CD14-positive monocyte (primary cell): ENCODE measurements at regions of chr9 and their contacts with region 1.

Region 1: DNA sequence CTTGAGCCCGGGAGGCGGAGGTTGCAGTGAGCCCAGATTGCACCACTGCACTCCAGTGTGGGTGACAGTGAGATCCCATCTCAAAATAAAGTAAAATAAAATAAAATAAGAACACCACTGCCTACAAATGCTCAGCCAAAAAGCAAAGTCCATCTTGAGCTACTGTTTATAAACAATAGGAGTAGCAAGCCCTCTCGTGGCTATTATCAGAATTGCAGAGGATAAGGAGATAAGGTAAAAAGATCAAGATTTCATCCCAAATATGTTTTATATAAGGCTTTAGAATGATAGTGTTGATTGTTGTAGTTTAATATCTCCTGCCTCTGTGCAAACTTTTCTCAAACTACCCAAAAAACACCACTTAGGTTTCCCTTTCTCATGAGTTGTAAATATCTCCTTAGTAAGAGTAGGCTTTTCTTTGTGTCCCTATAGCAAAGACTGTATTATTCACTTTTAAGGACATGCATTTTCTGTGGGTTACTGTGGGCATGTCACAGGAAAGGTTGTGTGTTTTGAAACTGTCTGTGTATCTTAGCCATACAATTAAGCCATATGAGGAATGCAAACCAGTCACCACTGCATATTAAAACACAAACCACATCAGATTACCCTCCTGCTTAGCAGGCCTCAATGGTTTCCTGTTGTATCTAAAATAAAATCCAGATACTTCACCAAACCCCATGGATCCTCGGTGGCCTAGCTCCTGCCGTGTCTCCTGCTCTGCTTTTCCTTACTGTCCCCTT is 31.8 kb upstream of the CKS2 start:
- DNase-seq: peak in 2 of 3 donors; percentile 16 to 36
- H3K4me3 ChIP-seq: no peak overlapping the region
- H3K4me3 Mint-ChIP-seq: no peak overlapping the region
- H3K27ac ChIP-seq: no peak overlapping the region
- H3K27ac Mint-ChIP-seq: no peak overlapping the region
- H3K4me1 ChIP-seq: no peaks in the 10 kb centered on the region
- H3K4me1 Mint-ChIP-seq: peaks cover 8% of the 10 kb centered on the region
- H3K27me3 ChIP-seq: no peaks in the 10 kb centered on the region
- H3K27me3 Mint-ChIP-seq: peaks cover 0 to 5% (median 2%) of the 10 kb centered on the region in 3 donors
- CTCF ChIP-seq: peak; percentile 90

Region 2: DNA sequence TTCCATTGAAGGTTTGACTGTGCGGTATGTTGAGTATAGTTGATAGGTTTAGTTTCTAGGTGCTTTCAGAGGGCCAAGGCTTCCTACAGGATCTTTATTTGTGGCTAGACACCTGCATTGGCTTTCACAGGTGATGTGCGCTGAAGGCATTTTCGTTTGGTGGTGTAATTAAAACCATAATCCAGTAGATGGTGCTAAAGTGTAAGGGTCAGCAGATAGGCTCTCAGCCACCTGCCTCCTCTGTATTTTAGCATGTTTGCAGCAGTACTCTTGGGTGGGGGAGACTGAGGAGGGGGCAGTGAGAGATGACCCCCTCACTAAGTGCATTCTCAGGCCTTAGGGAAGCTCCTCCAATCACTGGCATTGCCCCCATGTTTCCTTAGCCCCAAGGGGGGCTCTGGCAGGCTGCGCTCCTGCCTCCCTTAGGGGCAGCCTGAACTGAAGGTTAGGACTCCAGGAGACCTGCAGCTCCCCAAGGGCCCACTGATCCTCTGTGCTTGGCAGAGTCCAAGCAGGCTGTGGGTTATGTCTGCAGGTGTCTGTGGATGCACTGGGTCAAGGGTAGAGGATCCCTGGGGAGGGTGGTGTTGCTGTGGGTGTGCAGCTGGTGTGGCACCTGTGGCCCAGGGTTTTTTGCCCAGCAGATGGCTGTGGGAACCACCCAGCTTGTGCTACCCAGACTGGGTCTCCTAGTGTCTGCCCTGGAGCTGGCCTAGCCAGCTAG is 1328.2 kb before region 1 on chr9:
- intact Hi-C with region 1: loop called in 1 of 2 experiments (anchors 10 kb)
- DNase-seq: peak in 2 of 3 donors; percentile 35 to 47
- H3K4me3 ChIP-seq: no peak overlapping the region
- H3K4me3 Mint-ChIP-seq: no peak overlapping the region
- H3K27ac ChIP-seq: no peak overlapping the region
- H3K27ac Mint-ChIP-seq: no peak overlapping the region
- H3K4me1 ChIP-seq: no peaks in the 10 kb centered on the region
- H3K4me1 Mint-ChIP-seq: no peaks in the 10 kb centered on the region
- H3K27me3 ChIP-seq: peaks cover 0 to 19% of the 10 kb centered on the region in 2 donors
- H3K27me3 Mint-ChIP-seq: peaks cover 12 to 27% (median 24%) of the 10 kb centered on the region in 3 donors
- CTCF ChIP-seq: peak; percentile 78

Region 3: DNA sequence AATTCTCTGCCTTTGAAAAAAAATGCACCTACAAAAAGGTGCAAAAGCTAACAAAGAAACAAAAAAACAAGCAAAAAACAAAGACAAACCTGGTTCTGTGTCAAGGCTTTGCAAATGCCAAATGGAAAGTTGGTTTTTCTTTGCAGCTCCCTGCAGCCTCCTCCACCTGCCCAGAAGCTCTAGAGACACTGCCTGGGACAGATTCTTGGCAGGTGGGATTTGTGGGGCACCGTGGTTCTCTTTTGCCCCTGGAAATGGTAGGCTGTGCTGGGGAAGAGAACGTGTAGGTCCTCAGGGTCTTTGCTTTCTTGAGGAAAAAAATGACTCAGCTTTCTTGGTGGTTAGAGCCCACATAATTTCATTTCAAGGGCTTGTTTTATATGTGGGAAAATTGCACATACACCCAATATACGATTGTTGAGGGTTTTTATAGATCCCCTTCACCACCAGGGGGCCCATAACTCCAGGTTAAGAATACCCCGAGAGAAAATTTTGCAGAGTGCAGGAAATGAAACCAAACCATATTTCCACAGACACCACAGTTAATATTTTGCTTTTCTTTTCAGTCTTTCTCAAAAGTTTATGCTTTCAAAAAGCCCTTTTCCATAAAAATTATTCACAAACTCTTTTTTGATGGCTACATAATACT is 685.5 kb before region 1 on chr9:
- intact Hi-C with region 1: loop called (anchors 5 kb)
- DNase-seq: peak; percentile 26 to 50 (median 45)
- H3K4me3 ChIP-seq: no peak overlapping the region
- H3K4me3 Mint-ChIP-seq: no peak overlapping the region
- H3K27ac ChIP-seq: no peak overlapping the region
- H3K27ac Mint-ChIP-seq: no peak overlapping the region
- H3K4me1 ChIP-seq: no peaks in the 10 kb centered on the region
- H3K4me1 Mint-ChIP-seq: peaks cover 13% of the 10 kb centered on the region
- H3K27me3 ChIP-seq: no peaks in the 10 kb centered on the region
- H3K27me3 Mint-ChIP-seq: no peaks in the 10 kb centered on the region
- CTCF ChIP-seq: peak; percentile 80